ENCODE measurements at regions of chr1 and their contacts with region 1.

Region 1: GRCh38 chr1:172497230-172497629 is 35.7 kb upstream of the SUCO start:
- DNase-seq: peak; percentile 63 to 83
- H3K4me3 ChIP-seq: no peak overlapping the region
- H3K27ac ChIP-seq: no peak overlapping the region
- H3K4me1 ChIP-seq: peaks cover 35% of the 10 kb centered on the region
- H3K27me3 ChIP-seq: no peaks in the 10 kb centered on the region
- CTCF ChIP-seq: no peak

Region 2: DNA sequence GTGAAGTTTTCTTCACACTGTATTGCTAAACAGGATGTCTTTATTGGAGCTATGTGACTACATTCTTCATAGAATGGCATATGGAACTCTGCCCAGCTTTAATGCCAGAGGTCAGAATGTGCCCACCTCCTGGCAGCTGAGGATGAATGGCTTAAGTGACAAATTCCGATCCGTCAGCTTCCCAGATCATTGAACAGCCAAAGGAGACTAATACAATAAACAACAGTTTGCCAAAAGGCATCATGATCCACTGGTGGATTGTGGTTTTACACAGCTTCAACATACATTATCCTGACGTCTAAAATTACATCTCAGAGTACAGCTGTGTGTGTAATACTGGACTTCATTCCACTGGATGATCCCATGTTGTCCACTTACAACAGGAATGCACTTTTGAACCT is 145.5 kb before region 1 on chr1:
- CTCF ChIA-PET with region 1: no interaction called
- POLR2A ChIA-PET with region 1: interaction called, 10 read pairs
- intact Hi-C with region 1: no loop called
- DNase-seq: peak; percentile 54 to 82
- H3K4me3 ChIP-seq: no peak overlapping the region
- H3K27ac ChIP-seq: peak overlapping the region; percentile 62
- H3K4me1 ChIP-seq: peaks cover 42% of the 10 kb centered on the region
- H3K27me3 ChIP-seq: no peaks in the 10 kb centered on the region
- CTCF ChIP-seq: no peak

Region 3: DNA sequence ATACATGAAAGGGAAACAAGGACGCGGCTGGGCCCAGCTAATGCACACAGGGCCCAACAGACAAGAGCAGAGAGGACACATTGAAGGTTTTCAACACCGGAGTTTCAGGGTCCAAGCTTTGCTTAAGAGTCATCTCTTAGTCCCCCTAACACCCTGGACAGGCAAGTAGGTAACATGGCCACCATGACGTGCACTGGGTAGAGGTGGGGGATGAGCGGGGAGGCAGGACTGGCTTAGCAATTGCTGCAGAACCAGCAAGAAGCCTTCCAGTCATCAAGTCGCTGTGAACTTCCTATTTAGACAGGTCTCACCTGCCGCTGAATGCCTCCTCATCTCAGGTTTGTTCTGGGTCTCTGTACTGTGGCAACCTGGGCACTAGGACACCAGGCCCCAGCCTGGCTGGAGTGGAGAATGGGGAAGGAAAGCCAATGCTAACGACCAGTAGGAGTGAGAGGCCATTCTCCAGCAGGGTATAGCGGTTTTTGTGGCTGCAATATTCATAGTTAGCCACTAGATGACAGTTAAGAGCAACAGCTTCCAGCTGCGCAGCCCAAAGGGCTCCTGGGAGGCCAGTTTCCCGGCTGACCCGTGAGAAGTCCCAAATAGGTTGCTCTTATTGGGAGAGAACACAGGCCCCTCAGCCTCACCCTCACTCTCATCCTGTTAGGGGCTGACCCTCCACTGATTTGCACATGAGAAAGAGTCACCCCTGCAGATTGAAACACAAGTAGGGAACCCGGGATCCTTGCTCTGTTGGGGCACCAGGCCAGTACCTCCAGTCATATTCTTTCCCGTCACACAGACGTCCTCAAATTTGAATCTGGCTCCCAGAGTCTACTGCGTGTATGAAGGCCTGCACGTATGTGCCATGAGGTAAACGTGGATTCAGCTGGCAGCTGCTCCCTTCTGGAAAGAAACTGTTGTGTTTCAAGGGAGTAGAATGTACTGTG is 47.4 kb before region 1 on chr1:
- CTCF ChIA-PET with region 1: no interaction called
- POLR2A ChIA-PET with region 1: interaction called, 4 read pairs
- intact Hi-C with region 1: loop called (anchors 1 kb)
- DNase-seq: peak; percentile 42 to 52
- H3K4me3 ChIP-seq: peak overlapping the region; percentile 38; the same call in 1 of the 2 replicates
- H3K27ac ChIP-seq: peak overlapping the region; percentile 91
- H3K4me1 ChIP-seq: peaks cover 67% of the 10 kb centered on the region
- H3K27me3 ChIP-seq: no peaks in the 10 kb centered on the region
- CTCF ChIP-seq: peak; percentile 76

Region 4: DNA sequence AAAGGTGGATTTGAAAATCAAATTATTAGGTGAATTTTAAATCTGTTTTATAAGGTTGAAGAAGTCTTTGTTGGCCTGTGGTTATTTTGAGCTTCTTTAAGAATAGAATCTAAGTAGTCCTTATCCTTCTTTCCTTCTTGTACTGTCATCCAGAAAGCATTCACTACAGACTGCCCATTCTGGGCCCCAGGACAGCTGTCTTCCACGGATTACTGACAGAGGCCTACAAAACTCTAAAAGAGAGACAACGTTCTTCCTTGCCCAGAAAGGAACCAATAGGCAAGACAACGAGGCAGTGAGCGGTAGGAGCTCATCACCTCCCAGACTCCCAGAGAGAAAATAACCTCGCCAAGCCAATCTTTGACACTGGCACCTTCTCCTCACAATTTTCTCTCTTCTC is 28.9 kb before region 1 on chr1:
- CTCF ChIA-PET with region 1: no interaction called
- POLR2A ChIA-PET with region 1: interaction called, 10 read pairs
- intact Hi-C with region 1: no loop called
- DNase-seq: no peak
- H3K4me3 ChIP-seq: no peak overlapping the region
- H3K27ac ChIP-seq: no peak overlapping the region
- H3K4me1 ChIP-seq: peaks cover 15% of the 10 kb centered on the region
- H3K27me3 ChIP-seq: no peaks in the 10 kb centered on the region
- CTCF ChIP-seq: no peak

Region 5: DNA sequence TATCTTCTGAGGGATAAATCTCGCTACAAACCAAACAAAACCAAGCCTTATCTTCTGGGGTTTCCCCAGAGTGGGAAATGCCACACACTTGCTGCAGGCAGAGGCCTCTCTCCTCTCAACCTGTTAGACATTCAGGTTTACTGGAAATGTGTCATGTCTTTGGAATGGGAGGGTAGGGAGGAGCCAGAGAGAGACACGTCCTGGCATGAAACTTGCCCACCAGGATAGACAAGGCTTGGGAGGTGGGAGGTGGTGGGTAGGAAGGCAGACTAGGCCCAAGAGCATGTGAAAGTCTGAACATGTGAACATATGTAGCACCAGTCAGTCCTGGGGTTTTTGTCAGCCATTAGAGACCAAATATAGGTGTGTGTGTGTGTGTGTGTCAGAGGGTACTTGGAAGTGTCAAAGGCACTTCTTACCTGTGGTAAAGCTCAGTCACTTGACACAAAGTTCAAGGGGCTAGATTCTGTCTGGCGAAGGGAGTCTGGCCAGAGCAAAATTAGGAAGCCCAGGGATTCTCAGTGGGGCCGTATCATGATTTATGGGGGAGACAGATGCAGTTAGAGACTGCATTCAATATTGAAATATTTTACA is 20.9 kb before region 1 on chr1:
- CTCF ChIA-PET with region 1: no interaction called
- POLR2A ChIA-PET with region 1: no interaction called
- intact Hi-C with region 1: loop called (anchors 1 kb)
- DNase-seq: peak; percentile 69 to 86
- H3K4me3 ChIP-seq: no peak overlapping the region
- H3K27ac ChIP-seq: peak overlapping the region; percentile 54
- H3K4me1 ChIP-seq: peaks cover 31% of the 10 kb centered on the region
- H3K27me3 ChIP-seq: no peaks in the 10 kb centered on the region
- CTCF ChIP-seq: no peak

Region 6: GRCh38 chr1:172638885-172639831 is 141.9 kb after region 1 on chr1:
- CTCF ChIA-PET with region 1: interaction called, 3 read pairs
- POLR2A ChIA-PET with region 1: no interaction called
- intact Hi-C with region 1: loop called (anchors 1 kb)
- DNase-seq: peak; percentile 55 to 98
- H3K4me3 ChIP-seq: peak overlapping the region; percentile 3; the same call in 1 of the 2 replicates
- H3K27ac ChIP-seq: peak overlapping the region; percentile 87
- H3K4me1 ChIP-seq: peaks cover 44% of the 10 kb centered on the region
- H3K27me3 ChIP-seq: no peaks in the 10 kb centered on the region
- CTCF ChIP-seq: no peak

Region 7: GRCh38 chr1:172674831-172675613 is 177.8 kb after region 1 on chr1:
- CTCF ChIA-PET with region 1: interaction called, 34 read pairs
- POLR2A ChIA-PET with region 1: no interaction called
- intact Hi-C with region 1: no loop called
- DNase-seq: no peak
- H3K4me3 ChIP-seq: no peak overlapping the region
- H3K27ac ChIP-seq: no peak overlapping the region
- H3K4me1 ChIP-seq: peaks cover 11% of the 10 kb centered on the region; the same call in 1 of the 2 replicates
- H3K27me3 ChIP-seq: no peaks in the 10 kb centered on the region
- CTCF ChIP-seq: no peak

Measured in PC-9 (cell line).